Activated T-helper 2 cell treated with anti-CD3 and anti-CD28 coated beads, Interferon-gamma antibody, Interleukin-2, Interleukin-4, amounts not matched to agents 10 μg/mL and 5 μg/mL and 100 μg/mL, durations not matched to agents 14 hours and 24 hours and 36 hours (primary cell): ENCODE measurements at regions of chr18 and their contacts with region 1.

Region 1: DNA sequence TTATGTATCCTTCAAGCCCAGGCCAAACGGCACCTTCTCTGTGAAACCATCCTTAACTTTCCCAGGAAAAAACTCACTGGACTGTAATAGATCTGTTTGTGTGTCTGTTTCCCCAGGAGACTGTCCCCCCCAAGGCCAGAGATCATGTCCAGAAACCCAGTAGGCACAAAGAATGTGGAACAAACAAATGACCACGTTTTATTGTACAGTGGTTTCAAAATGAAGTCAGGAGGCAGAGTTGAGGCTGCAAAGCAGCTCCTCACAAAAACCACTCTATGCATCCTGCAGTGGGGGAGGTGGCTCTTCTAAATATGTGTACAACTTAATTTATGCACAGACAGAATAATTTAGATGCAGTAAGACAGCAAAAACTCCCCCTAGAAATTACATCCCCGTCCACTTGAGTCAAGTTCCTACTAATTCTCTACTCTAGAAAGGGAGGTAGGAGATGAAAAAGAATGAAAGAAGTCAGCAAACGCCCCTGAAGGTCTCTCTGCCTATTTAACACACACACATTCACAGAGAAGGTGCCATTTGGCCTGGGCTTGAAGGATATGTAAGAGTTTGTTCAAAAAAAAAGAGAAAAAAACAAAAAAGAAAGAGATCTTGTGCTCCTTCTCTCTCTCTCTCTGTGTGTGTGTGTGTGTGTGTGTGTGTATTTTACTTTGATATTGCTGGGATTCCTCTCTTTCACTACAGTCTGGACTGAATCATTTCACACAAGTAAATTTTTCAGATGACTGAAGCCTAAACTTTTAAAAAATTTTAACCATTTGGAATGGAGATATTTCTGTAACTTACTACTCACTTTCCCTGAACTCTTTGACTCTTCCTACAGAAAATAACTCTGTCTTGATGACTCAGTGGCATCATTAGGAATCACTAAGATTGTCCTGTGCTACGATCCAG is 19.5 kb downstream of the BCL2 start:
- DNase-seq: no peak
- H3K4me3 Mint-ChIP-seq: peak overlapping the region; percentile 61
- H3K27ac Mint-ChIP-seq: peak overlapping the region; percentile 94
- H3K4me1 Mint-ChIP-seq: peaks cover 79% of the 10 kb centered on the region
- H3K27me3 Mint-ChIP-seq: no peaks in the 10 kb centered on the region

Region 2: GRCh38 chr18:63199743-63200241 is 100.3 kb before region 1 on chr18:
- intact Hi-C with region 1: loop called (anchors 1 kb)
- DNase-seq: peak; percentile 56
- H3K4me3 Mint-ChIP-seq: no peak overlapping the region
- H3K27ac Mint-ChIP-seq: no peak overlapping the region
- H3K4me1 Mint-ChIP-seq: peaks cover 30% of the 10 kb centered on the region
- H3K27me3 Mint-ChIP-seq: no peaks in the 10 kb centered on the region

Region 3: DNA sequence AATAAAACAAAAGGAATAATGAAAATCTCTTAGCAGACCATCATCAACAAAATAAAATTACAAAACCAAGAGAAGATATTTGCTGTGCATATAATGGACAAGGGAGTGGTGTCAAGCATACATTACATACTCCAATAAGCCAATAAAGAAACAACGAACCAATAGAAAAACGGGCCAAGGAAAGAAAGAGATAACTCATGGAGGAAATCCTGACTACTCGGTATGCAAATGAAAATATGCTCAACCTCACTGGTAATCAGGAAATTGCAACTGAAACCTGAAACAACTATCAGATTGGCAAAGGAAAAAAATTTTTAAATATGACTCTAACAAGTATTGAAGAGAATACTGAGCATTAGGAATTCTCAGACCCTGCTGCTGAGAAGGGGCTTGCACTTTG is 65.2 kb before region 1 on chr18:
- intact Hi-C with region 1: loop called (anchors 2 kb)
- DNase-seq: no peak
- H3K4me3 Mint-ChIP-seq: peak overlapping the region; percentile 17
- H3K27ac Mint-ChIP-seq: peak overlapping the region; percentile 80
- H3K4me1 Mint-ChIP-seq: peaks cover 71% of the 10 kb centered on the region
- H3K27me3 Mint-ChIP-seq: no peaks in the 10 kb centered on the region

Region 4: GRCh38 chr18:63267975-63268721 is 31.9 kb before region 1 on chr18:
- intact Hi-C with region 1: loop called (anchors 2 kb)
- DNase-seq: no peak
- H3K4me3 Mint-ChIP-seq: peak overlapping the region; percentile 60
- H3K27ac Mint-ChIP-seq: peak overlapping the region; percentile 83
- H3K4me1 Mint-ChIP-seq: peaks cover 57% of the 10 kb centered on the region
- H3K27me3 Mint-ChIP-seq: no peaks in the 10 kb centered on the region

Region 5: DNA sequence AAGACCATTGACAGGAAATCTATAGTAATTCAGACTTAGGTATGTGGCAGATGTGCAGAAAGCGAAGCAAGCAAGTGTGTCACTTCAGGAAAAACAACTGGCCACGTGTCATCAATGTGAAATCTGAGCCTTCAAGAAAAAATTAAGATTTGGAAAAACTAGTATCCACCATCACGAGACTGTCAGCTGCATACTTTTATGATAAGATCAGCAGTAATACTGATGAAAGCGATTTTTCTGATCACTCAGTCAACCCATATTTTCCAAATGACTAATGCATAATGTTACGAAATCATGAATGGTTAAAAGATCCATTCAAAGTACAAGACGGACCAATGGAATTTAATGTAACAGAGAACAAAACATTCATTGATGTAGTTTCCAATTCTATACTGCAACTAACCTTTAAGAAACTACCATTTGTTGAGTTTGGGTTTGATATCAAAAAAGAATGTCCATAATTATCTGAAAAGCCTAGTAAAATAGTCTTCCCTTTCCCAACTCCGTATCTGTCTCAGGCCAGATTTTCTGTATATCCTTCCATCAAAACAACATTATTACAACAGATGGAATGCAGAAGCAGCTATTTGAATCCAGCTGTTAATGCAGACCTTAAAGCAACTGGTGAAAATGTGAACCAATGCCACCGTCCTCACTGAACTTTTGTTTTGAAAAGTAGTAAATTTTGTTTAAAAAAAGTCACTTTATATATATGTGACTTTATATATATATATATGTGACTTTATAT is 36.4 kb after region 1 on chr18:
- intact Hi-C with region 1: no loop called
- DNase-seq: no peak
- H3K4me3 Mint-ChIP-seq: no peak overlapping the region
- H3K27ac Mint-ChIP-seq: no peak overlapping the region
- H3K4me1 Mint-ChIP-seq: peaks cover 15% of the 10 kb centered on the region
- H3K27me3 Mint-ChIP-seq: no peaks in the 10 kb centered on the region